ENCODE measurements at regions of chrX and their contacts with region 1.

Region 1: GRCh38 chrX:3651276-3651675 is 62.2 kb downstream of the PRKX start:
- DNase-seq: no peak
- H3K4me3 ChIP-seq: no peak overlapping the region
- CTCF ChIP-seq: no peak
- POLR2A ChIP-seq: no peak

Region 2: GRCh38 chrX:3699821-3700381 is 48.6 kb after region 1 on chrX:
- intact Hi-C with region 1: loop called (anchors 10 kb)
- DNase-seq: no peak
- H3K4me3 ChIP-seq: no peak overlapping the region
- CTCF ChIP-seq: no peak
- POLR2A ChIP-seq: no peak

Region 3: GRCh38 chrX:3806630-3807029 is 155.4 kb after region 1 on chrX:
- intact Hi-C with region 1: loop called (anchors 10 kb)
- DNase-seq: no peak
- H3K4me3 ChIP-seq: no peak overlapping the region
- CTCF ChIP-seq: no peak
- POLR2A ChIP-seq: no peak